Prostate gland (tissue), 2 donors: ENCODE measurements at regions of chr3 and their contacts with region 1.

Region 1: DNA sequence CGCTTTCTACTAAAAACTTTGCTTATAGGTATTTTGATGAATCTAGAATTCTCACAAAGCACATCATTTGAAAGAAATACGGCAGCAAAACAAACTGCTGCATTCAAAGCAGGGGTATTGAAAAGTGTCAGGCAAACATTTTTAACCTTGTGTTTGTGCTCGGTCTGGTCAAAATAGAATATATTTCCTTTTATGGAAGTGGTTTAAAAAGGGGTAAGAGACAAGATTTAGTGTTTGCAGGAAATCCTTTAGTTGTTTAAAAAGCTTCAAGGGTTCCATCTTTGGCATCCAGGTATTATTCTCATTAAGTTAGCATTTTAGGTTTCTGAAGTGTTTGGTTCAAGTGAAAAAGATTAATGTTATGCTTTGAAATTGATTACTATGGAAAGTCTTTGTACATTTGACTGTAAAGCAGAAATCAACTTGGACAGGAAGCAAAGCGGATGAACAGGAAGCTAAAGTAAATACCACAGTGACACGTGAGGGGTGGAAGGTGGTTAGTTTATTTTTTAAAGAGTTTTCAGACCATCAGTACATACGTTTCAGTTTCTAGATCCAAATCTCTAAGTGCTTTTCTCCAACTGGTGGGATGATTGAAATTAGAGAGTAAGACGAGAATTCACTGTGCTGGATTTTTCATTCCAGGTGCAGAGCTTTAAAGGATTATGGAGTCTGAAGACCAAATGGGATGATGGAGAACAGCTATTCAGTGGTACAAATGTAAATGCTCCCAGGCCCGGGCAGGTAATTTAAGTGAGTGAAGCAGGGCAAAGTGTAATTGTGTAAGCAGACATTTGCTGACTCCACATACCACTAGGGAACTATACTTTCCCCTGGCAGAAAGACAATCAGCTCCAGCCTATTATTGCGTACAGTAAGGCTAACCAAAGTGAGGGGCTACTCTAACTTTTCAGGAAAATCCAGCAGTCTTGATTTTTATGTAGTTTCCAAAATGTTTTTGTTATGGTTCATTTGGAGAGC is 341.8 kb upstream of the TBL1XR1 start:
- DNase-seq: peak; percentile 33
- H3K4me3 ChIP-seq: no peak overlapping the region
- H3K27ac ChIP-seq: peak overlapping the region in 1 of 2 donors; percentile 41
- H3K4me1 ChIP-seq: no peaks in the 10 kb centered on the region
- H3K27me3 ChIP-seq: no peaks in the 10 kb centered on the region
- CTCF ChIP-seq: no peak
- POLR2A ChIP-seq: no peak

Region 2: GRCh38 chr3:177441813-177442646 is 97.0 kb before region 1 on chr3:
- intact Hi-C with region 1: loop called (anchors 5 kb)
- DNase-seq: no peak
- H3K4me3 ChIP-seq: peak overlapping the region in 1 of 2 donors; percentile 12
- H3K27ac ChIP-seq: peak overlapping the region; percentile 57 to 66
- H3K4me1 ChIP-seq: no peaks in the 10 kb centered on the region
- H3K27me3 ChIP-seq: no peaks in the 10 kb centered on the region
- CTCF ChIP-seq: no peak
- POLR2A ChIP-seq: no peak